K562 (cell line): ENCODE measurements at regions of chr10 and their contacts with region 1.

Region 1: DNA sequence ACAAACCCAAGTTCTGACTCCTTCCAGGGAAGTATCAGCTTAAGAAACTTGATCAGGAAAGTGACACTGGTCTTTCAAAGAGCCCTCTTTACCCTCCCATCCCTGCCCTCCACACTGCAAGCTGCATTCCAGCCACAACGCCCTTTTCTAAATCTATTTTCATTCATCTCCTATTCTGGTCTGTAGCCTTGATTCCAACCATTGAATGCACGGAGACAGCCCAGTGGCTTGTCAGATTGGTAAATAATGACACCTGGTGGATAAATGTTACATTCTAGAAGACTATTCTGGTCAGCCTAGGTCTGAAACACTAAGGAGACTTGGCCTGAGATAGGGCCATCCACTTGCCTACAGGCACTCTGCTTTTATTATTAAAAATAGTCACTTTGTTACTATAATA is 20.9 kb downstream of the MORN4 start:
- DNase-seq: peak; percentile 37 to 49 (median 41)
- ATAC-seq: peak; percentile 92
- H3K4me3 ChIP-seq: no peak overlapping the region
- H3K27ac ChIP-seq: no peak overlapping the region
- H3K4me1 ChIP-seq: peaks cover 0 to 5% of the 10 kb centered on the region in 2 experiments; a peak in 2 of 5 replicates
- H3K27me3 ChIP-seq: no peaks in the 10 kb centered on the region
- CTCF ChIP-seq: peak; percentile 46 to 65 (median 53); a peak in 4 of 6 replicates
- EP300 ChIP-seq: no peak
- POLR2A ChIP-seq: no peak
- RAD21 ChIP-seq: peak; percentile 48 to 66

Region 2: GRCh38 chr10:97463363-97464132 is 148.8 kb before region 1 on chr10:
- CTCF ChIA-PET with region 1: no interaction called
- POLR2A ChIA-PET with region 1: interaction called, 4 read pairs
- in situ Hi-C with region 1: loop called (anchors 5 kb)
- intact Hi-C with region 1: no loop called
- DNase-seq: peak; percentile 23 to 42 (median 40)
- ATAC-seq: peak; percentile 88
- H3K4me3 ChIP-seq: no peak overlapping the region
- H3K27ac ChIP-seq: no peak overlapping the region
- H3K4me1 ChIP-seq: no peaks in the 10 kb centered on the region
- H3K27me3 ChIP-seq: no peaks in the 10 kb centered on the region
- CTCF ChIP-seq: peak; percentile 75 to 78 (median 76)
- EP300 ChIP-seq: no peak
- POLR2A ChIP-seq: no peak
- RAD21 ChIP-seq: peak; percentile 44 to 65

Region 3: DNA sequence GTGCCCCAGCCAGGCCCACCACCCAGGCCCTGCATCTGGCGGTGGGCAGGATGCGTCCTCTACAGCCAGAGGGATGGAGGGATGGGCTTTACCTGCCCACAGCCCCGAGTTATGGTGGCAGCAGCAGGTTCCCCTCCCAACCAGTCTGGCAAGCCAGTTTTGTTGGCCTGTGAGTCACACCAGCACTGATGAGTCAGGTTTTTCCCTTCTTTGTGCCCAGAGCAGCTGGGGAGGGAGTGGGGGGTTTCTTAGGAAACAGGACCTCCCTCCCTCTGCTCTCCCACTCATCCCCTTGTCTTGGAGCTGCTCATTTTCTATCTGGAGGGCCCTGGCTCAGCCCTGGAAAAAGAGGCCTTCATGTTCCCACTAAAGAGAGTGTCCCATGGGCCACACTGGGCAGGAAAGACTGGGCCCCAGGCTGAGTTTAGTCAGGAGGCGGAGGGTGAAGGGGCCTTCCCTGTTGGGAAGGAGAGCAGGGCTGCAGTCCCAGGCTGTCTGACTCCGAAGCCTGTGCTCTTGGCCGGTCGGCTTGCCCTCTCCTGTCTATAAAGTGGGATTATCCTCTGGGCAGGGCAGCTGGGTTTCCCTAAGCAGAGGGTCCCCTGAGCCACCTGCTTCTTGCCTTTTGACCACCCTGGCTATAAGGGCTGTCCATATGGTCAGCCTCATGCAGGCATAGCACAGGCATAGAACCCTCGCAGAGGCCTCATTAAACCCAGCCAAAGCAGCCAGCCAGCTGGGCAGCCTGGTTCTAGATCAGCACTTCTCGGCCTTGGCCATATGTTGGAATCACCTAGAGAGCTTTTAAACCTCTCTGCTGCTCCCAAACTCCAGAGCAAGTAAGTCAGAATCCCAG is 70.0 kb before region 1 on chr10:
- CTCF ChIA-PET with region 1: no interaction called
- POLR2A ChIA-PET with region 1: no interaction called
- in situ Hi-C with region 1: no loop called
- intact Hi-C with region 1: no loop called
- DNase-seq: peak; percentile 24 to 58 (median 28)
- ATAC-seq: peak; percentile 20; the same call in 2 of the 3 replicates
- H3K4me3 ChIP-seq: no peak overlapping the region
- H3K27ac ChIP-seq: peak overlapping the region; percentile 52; the same call in 2 of the 3 replicates
- H3K4me1 ChIP-seq: peaks cover 15 to 21% of the 10 kb centered on the region in 2 experiments; a peak in 4 of 5 replicates
- H3K27me3 ChIP-seq: no peaks in the 10 kb centered on the region
- CTCF ChIP-seq: no peak
- EP300 ChIP-seq: no peak
- POLR2A ChIP-seq: no peak
- RAD21 ChIP-seq: no peak

Region 4: GRCh38 chr10:97572214-97572989 is 40.0 kb before region 1 on chr10 and contains the start of gene ANKRD2:
- CTCF ChIA-PET with region 1: interaction called, 23 read pairs
- POLR2A ChIA-PET with region 1: interaction called, 3 read pairs
- in situ Hi-C with region 1: no loop called
- intact Hi-C with region 1: loop called (anchors 1 kb)
- DNase-seq: peak; percentile 63 to 79 (median 70)
- ATAC-seq: peak; percentile 97
- H3K4me3 ChIP-seq: no peak within 1 kb of the TSS
- H3K27ac ChIP-seq: no peak within 1 kb of the TSS
- H3K4me1 ChIP-seq: peaks cover 2 to 13% of the 10 kb centered on the region in 2 experiments; a peak in 4 of 5 replicates
- H3K27me3 ChIP-seq: no peaks in the 10 kb centered on the region
- CTCF ChIP-seq: peak; percentile 82 to 88 (median 84)
- EP300 ChIP-seq: no peak
- POLR2A ChIP-seq: no peak
- RAD21 ChIP-seq: peak; percentile 75 to 86
- polyA plus RNA-seq, gene ANKRD2: not detected